ENCODE measurements at regions of chr16 and their contacts with region 1.

Region 1: GRCh38 chr16:22898874-22899348 is 84.9 kb downstream of the HS3ST2 start:
- DNase-seq: peak; percentile 12 to 60 (median 44)
- H3K4me3 ChIP-seq: no peak overlapping the region
- H3K4me3 Mint-ChIP-seq: no peak overlapping the region
- H3K27ac ChIP-seq: no peak overlapping the region
- H3K27ac Mint-ChIP-seq: no peak overlapping the region
- H3K4me1 ChIP-seq: no peaks in the 10 kb centered on the region
- H3K4me1 Mint-ChIP-seq: no peaks in the 10 kb centered on the region
- H3K27me3 ChIP-seq: peaks cover 3 to 15% of the 10 kb centered on the region in 2 donors
- H3K27me3 Mint-ChIP-seq: peaks cover 8 to 17% (median 14%) of the 10 kb centered on the region in 3 donors
- CTCF ChIP-seq: peak; percentile 92

Region 2: DNA sequence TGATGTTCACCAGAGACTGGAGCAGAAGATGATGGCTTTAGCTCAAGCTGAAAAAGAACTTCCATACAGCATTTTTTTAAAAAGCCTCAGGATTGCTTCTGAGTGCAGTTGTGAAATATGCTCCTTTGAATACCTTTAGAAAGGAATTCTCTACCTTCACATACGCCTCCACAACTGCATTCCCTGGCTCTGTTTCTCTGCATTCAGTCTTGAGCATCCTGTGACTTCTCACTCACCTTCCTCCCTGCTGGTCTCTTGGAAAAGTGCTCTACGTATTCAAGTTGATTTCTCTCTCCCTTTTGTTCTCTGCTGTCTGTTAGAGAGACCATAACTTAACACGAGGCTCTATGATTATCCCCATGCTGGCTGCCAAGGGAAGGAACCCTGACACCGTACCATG is 50.5 kb before region 1 on chr16:
- intact Hi-C with region 1: no loop called
- DNase-seq: no peak
- H3K4me3 ChIP-seq: no peak overlapping the region
- H3K4me3 Mint-ChIP-seq: no peak overlapping the region
- H3K27ac ChIP-seq: no peak overlapping the region
- H3K27ac Mint-ChIP-seq: no peak overlapping the region
- H3K4me1 ChIP-seq: no peaks in the 10 kb centered on the region
- H3K4me1 Mint-ChIP-seq: no peaks in the 10 kb centered on the region
- H3K27me3 ChIP-seq: peaks cover 2 to 5% of the 10 kb centered on the region in 2 donors
- H3K27me3 Mint-ChIP-seq: peaks cover 4 to 15% (median 7%) of the 10 kb centered on the region in 3 donors
- CTCF ChIP-seq: no peak

Region 3: DNA sequence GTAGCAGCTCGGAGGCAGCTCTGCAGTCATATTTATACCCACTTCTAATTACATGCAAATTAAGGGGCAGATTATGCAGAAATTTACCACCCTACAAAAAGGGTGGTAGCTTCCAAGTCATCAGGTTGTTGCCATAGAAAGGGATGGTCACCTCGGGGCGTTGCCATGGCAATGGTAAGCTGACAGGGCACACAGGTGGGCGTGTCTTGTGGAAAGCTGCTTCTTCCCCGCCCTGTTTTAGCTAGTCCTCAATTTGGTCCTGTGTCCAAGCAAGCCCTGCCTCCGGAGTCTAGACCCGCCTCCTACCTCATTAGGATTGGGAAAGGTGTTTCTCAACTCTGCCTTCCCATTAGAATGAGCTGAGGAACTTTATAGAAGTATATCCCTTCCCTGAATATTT is 13.7 kb after region 1 on chr16:
- intact Hi-C with region 1: no loop called
- DNase-seq: no peak
- H3K4me3 ChIP-seq: no peak overlapping the region
- H3K4me3 Mint-ChIP-seq: no peak overlapping the region
- H3K27ac ChIP-seq: no peak overlapping the region
- H3K27ac Mint-ChIP-seq: no peak overlapping the region
- H3K4me1 ChIP-seq: no peaks in the 10 kb centered on the region
- H3K4me1 Mint-ChIP-seq: no peaks in the 10 kb centered on the region
- H3K27me3 ChIP-seq: no peaks in the 10 kb centered on the region
- H3K27me3 Mint-ChIP-seq: peaks cover 3 to 7% (median 5%) of the 10 kb centered on the region in 3 donors
- CTCF ChIP-seq: no peak

Region 4: GRCh38 chr16:23060458-23061320 is 161.8 kb after region 1 on chr16:
- intact Hi-C with region 1: loop called in 1 of 2 experiments (anchors 5 kb)
- DNase-seq: peak; percentile 25 to 49 (median 47)
- H3K4me3 ChIP-seq: no peak overlapping the region
- H3K4me3 Mint-ChIP-seq: no peak overlapping the region
- H3K27ac ChIP-seq: no peak overlapping the region
- H3K27ac Mint-ChIP-seq: no peak overlapping the region
- H3K4me1 ChIP-seq: peaks cover 0 to 13% of the 10 kb centered on the region in 2 donors
- H3K4me1 Mint-ChIP-seq: peaks cover 36% of the 10 kb centered on the region
- H3K27me3 ChIP-seq: no peaks in the 10 kb centered on the region
- H3K27me3 Mint-ChIP-seq: peaks cover 5 to 9% (median 6%) of the 10 kb centered on the region in 3 donors
- CTCF ChIP-seq: peak; percentile 91

Region 5: DNA sequence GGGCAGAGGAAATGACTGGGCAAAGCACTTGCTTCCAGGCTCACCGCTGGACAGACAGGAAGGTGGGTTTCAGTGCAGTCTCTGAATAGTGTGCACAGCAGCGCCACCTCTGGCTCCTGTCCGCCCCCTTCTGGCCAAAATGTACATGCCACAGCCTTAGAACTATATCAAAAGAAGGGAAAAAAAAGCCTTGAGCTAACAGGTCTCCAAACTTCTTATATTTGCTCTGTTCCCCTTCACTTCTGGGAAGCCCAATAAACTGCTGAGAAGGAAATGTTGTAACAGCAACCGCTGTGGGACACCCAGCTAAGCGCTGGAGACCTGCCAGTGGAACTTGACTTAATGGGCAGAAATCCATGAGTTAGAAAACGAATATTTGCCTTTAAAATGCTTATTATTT is 536.6 kb after region 1 on chr16:
- intact Hi-C with region 1: loop called (anchors 5 to 10 kb)
- DNase-seq: peak; percentile 37 to 62 (median 46)
- H3K4me3 ChIP-seq: no peak overlapping the region
- H3K4me3 Mint-ChIP-seq: no peak overlapping the region
- H3K27ac ChIP-seq: peak overlapping the region in 1 of 2 donors; percentile 21
- H3K27ac Mint-ChIP-seq: peak overlapping the region in 6 of 7 donors; percentile 35 to 77 (median 55)
- H3K4me1 ChIP-seq: peaks cover 9 to 12% of the 10 kb centered on the region in 2 donors
- H3K4me1 Mint-ChIP-seq: peaks cover 13% of the 10 kb centered on the region
- H3K27me3 ChIP-seq: no peaks in the 10 kb centered on the region
- H3K27me3 Mint-ChIP-seq: no peaks in the 10 kb centered on the region
- CTCF ChIP-seq: peak; percentile 91

Measured in CD14-positive monocyte (primary cell).